Ascending aorta (tissue), 2 donors: ENCODE measurements at regions of chr6 and their contacts with region 1.

Region 1: GRCh38 chr6:37127961-37128862 is 41.7 kb upstream of the PIM1 start:
- DNase-seq: no peak
- H3K4me3 ChIP-seq: no peak overlapping the region
- H3K27ac ChIP-seq: no peak overlapping the region
- H3K4me1 ChIP-seq: peaks cover 0 to 3% of the 10 kb centered on the region in 2 donors
- H3K27me3 ChIP-seq: no peaks in the 10 kb centered on the region
- CTCF ChIP-seq: peak in 1 of 3 experiments; percentile 55

Region 2: DNA sequence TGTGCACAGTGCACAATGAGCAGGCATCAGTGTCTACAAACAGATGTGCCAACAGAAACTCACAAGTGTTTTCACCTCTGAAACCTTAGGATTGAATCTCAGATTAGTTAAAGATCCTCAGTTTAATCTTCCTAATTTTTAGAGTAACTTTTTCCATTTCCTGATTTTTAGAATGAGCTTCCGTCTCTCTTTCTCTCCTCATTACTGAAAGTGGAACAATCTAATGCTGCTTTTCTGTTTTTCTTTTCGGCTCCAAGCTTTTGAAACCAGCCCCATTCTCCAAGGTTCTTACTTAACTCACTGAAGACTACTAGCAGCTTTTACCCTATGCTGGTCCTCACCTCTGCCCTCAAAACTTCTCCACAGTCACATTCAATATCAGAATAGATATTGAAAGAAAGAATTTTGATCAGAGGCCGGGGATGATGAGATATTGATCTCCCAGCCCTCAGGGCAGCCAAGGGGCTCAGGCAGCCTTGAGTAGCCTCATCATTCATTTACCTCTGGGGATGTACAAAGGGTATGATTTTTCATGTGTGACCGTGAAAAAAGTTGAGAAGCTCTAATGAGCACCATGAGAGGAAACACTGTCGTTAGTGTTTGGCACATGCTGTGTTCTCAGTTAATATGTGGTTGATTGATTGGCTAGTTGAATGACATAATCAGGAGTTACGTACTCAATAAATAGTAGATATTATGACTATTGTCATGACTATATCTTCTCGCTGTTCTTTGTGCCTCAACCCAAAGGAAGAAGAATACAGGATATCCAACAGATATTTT is 569.0 kb before region 1 on chr6:
- intact Hi-C with region 1: no loop called
- DNase-seq: no peak
- H3K4me3 ChIP-seq: no peak overlapping the region
- H3K27ac ChIP-seq: no peak overlapping the region
- H3K4me1 ChIP-seq: peaks cover 0 to 4% of the 10 kb centered on the region in 2 donors
- H3K27me3 ChIP-seq: no peaks in the 10 kb centered on the region
- CTCF ChIP-seq: no peak

Region 3: DNA sequence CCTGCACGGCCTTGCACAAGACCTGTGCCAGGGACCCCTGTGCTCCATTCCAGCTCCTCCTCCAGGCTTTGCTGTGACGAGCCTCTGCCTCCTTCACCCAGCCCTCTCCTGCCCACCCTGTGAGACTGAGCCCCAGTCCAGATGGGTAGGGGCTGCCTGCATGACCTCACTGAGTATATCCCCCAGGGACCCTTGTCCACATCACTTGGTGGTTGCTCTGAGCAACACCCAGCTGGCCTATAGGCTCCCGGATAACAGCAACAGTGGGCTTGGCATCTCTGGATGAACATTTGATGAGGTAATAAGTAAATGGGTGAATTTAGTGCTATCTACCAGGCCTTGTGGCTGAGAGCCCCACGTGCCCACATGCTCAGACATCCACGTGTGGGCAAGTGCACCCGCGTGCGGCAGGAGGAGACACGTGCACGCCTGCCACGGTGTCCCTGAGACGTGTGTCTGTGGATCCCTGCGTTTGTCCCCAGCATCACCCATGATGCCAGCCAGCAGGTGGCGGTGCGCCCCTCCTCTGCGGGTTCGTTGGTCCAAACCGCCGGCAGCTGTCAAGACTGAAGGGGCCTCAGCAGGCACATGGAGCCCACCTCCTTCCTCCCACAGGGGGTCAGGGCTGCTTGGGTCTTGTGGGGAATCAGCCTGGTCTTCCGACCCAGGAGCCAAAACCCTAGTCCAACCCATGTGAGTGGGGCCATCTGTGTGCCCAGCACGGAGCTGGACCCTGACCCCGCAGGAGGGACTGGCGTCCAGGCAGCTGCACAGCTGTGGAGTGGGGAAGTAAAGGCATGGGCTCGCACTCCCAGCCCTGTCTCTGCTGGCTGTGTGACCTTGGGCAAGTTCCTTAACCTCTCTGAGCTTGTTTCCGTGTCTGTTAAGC is 76.8 kb before region 1 on chr6:
- intact Hi-C with region 1: loop called (anchors 5 kb)
- DNase-seq: peak; percentile 63 to 92
- H3K4me3 ChIP-seq: no peak overlapping the region
- H3K27ac ChIP-seq: no peak overlapping the region
- H3K4me1 ChIP-seq: peaks cover 0 to 6% of the 10 kb centered on the region in 2 donors
- H3K27me3 ChIP-seq: no peaks in the 10 kb centered on the region
- CTCF ChIP-seq: peak; percentile 88 to 92 (median 92)